GM12878 (cell line): ENCODE measurements at regions of chr9 and their contacts with region 1.

Region 1: DNA sequence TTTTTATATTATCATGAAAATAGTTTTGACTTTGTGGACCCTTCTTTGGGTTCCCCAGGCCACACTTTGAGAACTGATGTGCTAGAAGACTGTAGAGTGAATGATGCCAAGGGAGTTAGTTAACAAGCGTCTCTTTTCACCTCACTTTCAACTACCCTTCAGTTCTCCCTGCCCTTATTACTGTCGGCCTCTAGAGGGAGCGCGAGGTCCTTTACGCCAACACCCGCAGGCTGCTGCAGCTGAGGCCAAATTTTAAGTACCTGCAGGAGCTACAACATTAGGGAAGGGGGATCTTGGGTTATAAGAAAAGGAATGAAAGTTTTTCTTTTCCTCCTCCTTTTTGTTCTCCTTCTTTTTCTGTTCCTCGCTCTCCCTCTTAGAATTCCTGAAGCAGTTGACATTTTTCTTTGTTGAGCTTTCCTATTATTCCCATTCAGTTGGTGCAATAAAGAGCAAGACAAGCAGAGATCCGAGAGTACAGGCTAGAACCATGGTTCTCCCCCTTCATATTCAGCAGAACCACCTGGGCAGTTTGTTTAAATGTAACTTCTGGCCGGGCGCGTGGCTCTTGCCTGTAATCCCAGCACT is 84.0 kb downstream of the ZFAND5 start:
- DNase-seq: no peak
- ATAC-seq: peak; percentile 92
- H3K4me3 ChIP-seq: no peak overlapping the region
- H3K27ac ChIP-seq: no peak overlapping the region
- H3K4me1 ChIP-seq: no peaks in the 10 kb centered on the region
- H3K27me3 ChIP-seq: no peaks in the 10 kb centered on the region
- CTCF ChIP-seq: peak; percentile 91 to 99 (median 95); a peak in 5 of 6 replicates
- EP300 ChIP-seq: no peak
- POLR2A ChIP-seq: no peak
- RAD21 ChIP-seq: peak; percentile 99

Region 2: GRCh38 chr9:71587576-71588362 is 693.2 kb before region 1 on chr9:
- CTCF ChIA-PET with region 1: no interaction called
- POLR2A ChIA-PET with region 1: no interaction called
- RAD21 ChIA-PET with region 1: no interaction called
- SMC1A ChIA-PET with region 1: no interaction called
- in situ Hi-C with region 1: no loop called
- intact Hi-C with region 1: no loop called
- DNase-seq: no peak
- ATAC-seq: no peak
- H3K4me3 ChIP-seq: no peak overlapping the region
- H3K27ac ChIP-seq: no peak overlapping the region
- H3K4me1 ChIP-seq: no peaks in the 10 kb centered on the region
- H3K27me3 ChIP-seq: no peaks in the 10 kb centered on the region; a peak in 1 of 4 replicates
- CTCF ChIP-seq: no peak
- EP300 ChIP-seq: no peak
- POLR2A ChIP-seq: no peak
- RAD21 ChIP-seq: no peak

Region 3: GRCh38 chr9:72022841-72023240 is 258.2 kb before region 1 on chr9:
- CTCF ChIA-PET with region 1: interaction called, 17 read pairs
- POLR2A ChIA-PET with region 1: no interaction called
- RAD21 ChIA-PET with region 1: interaction called, 4 read pairs
- SMC1A ChIA-PET with region 1: interaction called, 6 read pairs
- in situ Hi-C with region 1: no loop called
- intact Hi-C with region 1: no loop called
- DNase-seq: no peak
- ATAC-seq: no peak
- H3K4me3 ChIP-seq: no peak overlapping the region
- H3K27ac ChIP-seq: no peak overlapping the region
- H3K4me1 ChIP-seq: no peaks in the 10 kb centered on the region
- H3K27me3 ChIP-seq: no peaks in the 10 kb centered on the region
- CTCF ChIP-seq: no peak
- EP300 ChIP-seq: no peak
- POLR2A ChIP-seq: no peak
- RAD21 ChIP-seq: no peak

Region 4: GRCh38 chr9:72251589-72251988 is 29.4 kb before region 1 on chr9:
- CTCF ChIA-PET with region 1: interaction called, 10 read pairs
- POLR2A ChIA-PET with region 1: no interaction called
- RAD21 ChIA-PET with region 1: interaction called, 3 read pairs
- SMC1A ChIA-PET with region 1: interaction called, 3 read pairs
- in situ Hi-C with region 1: no loop called
- intact Hi-C with region 1: no loop called
- DNase-seq: no peak
- ATAC-seq: no peak
- H3K4me3 ChIP-seq: no peak overlapping the region
- H3K27ac ChIP-seq: no peak overlapping the region
- H3K4me1 ChIP-seq: no peaks in the 10 kb centered on the region
- H3K27me3 ChIP-seq: no peaks in the 10 kb centered on the region
- CTCF ChIP-seq: no peak
- EP300 ChIP-seq: no peak
- POLR2A ChIP-seq: no peak
- RAD21 ChIP-seq: no peak

Region 5: DNA sequence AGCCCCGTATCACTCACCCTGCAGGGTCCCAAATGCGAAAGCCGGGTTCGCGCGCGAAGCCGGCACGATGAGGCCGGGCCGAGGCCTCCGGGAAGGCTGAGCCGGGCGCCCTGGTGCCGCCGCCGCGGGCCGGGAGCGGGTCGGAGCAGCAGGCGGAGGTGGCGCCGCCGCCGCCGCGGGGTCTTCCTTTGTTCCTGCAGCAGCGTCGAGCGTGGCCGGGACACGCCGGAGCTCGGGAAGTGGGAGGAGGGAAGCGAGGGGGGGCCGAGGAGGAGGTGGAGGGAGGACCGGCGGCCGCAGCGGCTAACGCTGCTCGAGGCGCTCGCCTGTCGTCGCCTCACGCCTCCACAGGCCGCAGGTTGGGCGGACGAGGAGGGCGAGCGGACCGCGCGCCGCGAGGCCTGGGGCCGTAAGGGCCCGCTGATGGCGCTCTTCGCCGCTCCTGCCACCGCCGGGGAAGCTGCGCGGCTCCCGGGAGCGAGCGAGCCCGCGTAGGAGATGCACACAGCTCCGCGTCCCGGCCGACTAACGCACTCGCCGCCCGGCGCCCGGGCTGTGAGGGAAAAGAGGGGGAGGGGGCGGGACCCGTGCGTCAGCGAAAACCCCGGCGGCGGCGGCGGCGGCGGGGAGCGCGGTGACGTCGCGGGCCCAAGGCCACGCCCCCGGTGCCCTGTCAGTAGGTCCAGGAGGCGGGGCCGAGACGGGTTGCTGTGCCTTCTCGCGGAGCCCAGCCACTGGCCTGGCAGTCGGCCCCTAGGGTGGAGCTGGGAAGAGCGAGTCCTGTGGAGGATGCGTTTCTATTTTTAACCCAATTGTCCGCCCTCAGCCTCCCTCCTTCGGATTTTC is 83.9 kb after region 1 on chr9 and contains the start of gene ZFAND5:
- CTCF ChIA-PET with region 1: interaction called, 26 read pairs
- POLR2A ChIA-PET with region 1: interaction called, 3 read pairs
- RAD21 ChIA-PET with region 1: interaction called, 24 read pairs
- SMC1A ChIA-PET with region 1: interaction called, 12 read pairs
- in situ Hi-C with region 1: no loop called
- intact Hi-C with region 1: no loop called
- DNase-seq: peak; percentile 57
- ATAC-seq: peak; percentile 88
- H3K4me3 ChIP-seq: peak within 1 kb of the TSS; percentile 91
- H3K27ac ChIP-seq: peak within 1 kb of the TSS; percentile 80
- H3K4me1 ChIP-seq: peaks cover 4% of the 10 kb centered on the region
- H3K27me3 ChIP-seq: no peaks in the 10 kb centered on the region
- CTCF ChIP-seq: peak in 1 of 3 experiments; percentile 27; a peak in 1 of 6 replicates
- EP300 ChIP-seq: peak in 1 of 2 experiments; percentile 44; a peak in 2 of 4 replicates
- POLR2A ChIP-seq: peak; percentile 97
- RAD21 ChIP-seq: peak; percentile 20; the same call in 1 of the 2 replicates
- polyA plus RNA-seq, gene ZFAND5: 22.5 to 32.3 TPM

Region 6: DNA sequence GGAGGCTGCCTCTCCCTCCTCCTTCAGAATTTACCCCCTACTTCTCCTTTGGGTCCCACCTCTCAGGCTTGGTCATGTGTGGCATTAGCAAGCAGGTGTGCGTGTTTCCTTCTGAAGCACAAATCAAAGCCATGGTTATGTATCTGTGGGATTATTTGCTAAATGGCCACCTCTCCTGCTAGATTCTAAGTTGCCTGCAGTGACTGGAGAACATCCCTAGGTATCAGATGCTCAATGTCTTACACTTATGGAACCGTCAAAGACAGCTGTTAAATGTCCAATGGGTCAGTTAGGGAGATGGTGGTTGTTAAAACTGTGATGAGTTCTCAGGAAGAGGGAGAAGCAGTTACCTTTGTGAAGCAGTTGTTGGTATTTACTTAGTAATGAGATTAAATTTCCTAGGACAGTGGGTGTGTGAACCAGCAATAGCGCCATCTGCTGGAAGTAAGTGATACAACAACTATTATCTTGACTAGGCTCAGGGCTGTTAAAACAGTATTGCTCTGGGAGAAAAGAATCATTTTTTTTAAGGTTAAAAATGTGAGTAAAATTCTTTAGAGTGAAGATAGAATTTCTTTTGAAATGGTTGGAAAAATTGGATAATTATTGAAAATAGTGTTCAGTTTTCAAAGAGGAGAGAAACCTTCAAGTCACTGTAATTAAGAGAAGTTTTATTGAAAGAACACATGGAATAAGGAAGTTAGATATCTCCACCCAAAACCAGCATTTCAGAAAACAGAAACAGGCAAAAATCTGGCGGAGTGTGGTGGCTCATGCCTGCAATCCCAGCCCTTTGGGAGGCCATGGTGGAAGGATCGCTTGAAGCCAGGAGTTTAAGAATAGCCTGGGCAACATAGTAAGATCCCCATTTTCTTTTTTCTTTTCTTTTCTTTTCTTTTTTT is 311.7 kb after region 1 on chr9:
- CTCF ChIA-PET with region 1: interaction called, 172 read pairs
- POLR2A ChIA-PET with region 1: no interaction called
- RAD21 ChIA-PET with region 1: interaction called, 63 read pairs
- SMC1A ChIA-PET with region 1: interaction called, 97 read pairs
- in situ Hi-C with region 1: loop called (anchors 5 kb)
- intact Hi-C with region 1: loop called (anchors 1 kb)
- DNase-seq: peak; percentile 23
- ATAC-seq: peak; percentile 94
- H3K4me3 ChIP-seq: no peak overlapping the region
- H3K27ac ChIP-seq: no peak overlapping the region
- H3K4me1 ChIP-seq: no peaks in the 10 kb centered on the region
- H3K27me3 ChIP-seq: no peaks in the 10 kb centered on the region
- CTCF ChIP-seq: peak; percentile 64 to 76 (median 69)
- EP300 ChIP-seq: no peak
- POLR2A ChIP-seq: no peak
- RAD21 ChIP-seq: peak; percentile 86

Region 7: DNA sequence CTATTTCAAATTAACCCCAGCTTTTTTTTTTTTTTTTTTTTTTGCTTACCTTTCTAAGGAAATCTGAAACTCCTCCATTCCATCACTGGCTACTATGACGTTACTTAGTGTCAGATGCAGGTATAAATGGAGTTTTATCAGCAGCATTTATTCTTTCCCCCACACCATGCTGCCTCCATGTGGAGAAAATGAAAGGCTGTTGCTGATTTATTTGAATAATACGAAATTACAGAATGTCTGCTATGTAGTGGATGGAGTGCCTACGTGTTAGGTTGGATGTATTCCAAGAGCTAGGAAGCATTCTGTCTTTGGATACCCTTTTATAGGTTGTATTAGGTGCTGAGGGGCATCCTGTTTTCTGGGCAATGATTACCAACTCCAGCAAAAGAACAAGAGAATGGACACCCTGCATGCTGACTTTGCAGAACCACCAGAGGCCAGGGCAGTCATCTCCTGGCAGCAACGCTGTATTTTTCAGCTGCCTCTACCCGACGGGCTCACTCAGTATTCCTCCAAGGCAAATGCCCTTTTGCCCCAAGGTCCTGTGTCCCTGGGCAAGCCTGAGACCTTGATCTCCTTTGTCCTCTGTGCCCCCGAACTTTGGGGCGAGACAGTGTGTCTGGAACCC is 472.4 kb after region 1 on chr9:
- CTCF ChIA-PET with region 1: interaction called, 22 read pairs
- POLR2A ChIA-PET with region 1: no interaction called
- RAD21 ChIA-PET with region 1: interaction called, 5 read pairs
- SMC1A ChIA-PET with region 1: interaction called, 4 read pairs
- in situ Hi-C with region 1: no loop called
- intact Hi-C with region 1: loop called (anchors 5 kb)
- DNase-seq: no peak
- ATAC-seq: no peak
- H3K4me3 ChIP-seq: no peak overlapping the region
- H3K27ac ChIP-seq: no peak overlapping the region
- H3K4me1 ChIP-seq: no peaks in the 10 kb centered on the region
- H3K27me3 ChIP-seq: no peaks in the 10 kb centered on the region; a peak in 1 of 4 replicates
- CTCF ChIP-seq: peak in 1 of 3 experiments; percentile 37; a peak in 1 of 6 replicates
- EP300 ChIP-seq: no peak
- POLR2A ChIP-seq: no peak
- RAD21 ChIP-seq: peak; percentile 61

Region 8: DNA sequence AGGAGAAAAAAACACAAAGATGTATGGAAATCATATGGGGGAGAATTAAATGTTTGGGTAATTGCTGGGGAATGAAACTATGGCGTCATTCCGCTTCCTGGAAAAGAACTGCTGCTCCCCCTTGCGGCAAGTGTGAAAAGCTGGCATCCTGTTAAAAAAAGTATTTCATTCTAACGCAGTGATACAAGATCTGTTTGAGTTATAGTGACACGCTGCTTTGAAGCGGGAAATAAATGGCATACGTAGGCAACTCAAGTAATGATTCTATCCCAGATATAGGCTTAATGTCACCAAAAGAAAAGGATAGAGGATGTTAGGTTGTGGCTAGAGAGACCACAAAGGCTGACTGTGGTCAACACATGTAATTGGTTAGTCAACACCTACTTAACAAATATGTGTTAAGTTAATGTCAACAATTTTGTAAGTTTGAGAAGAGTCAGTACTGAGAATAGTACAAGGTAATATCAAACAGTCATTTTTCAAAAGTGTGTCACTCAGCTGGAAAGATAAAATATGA is 742.1 kb after region 1 on chr9:
- CTCF ChIA-PET with region 1: interaction called, 16 read pairs
- POLR2A ChIA-PET with region 1: no interaction called
- RAD21 ChIA-PET with region 1: interaction called, 9 read pairs
- SMC1A ChIA-PET with region 1: interaction called, 12 read pairs
- in situ Hi-C with region 1: loop called (anchors 25 kb)
- intact Hi-C with region 1: loop called (anchors 1 kb)
- DNase-seq: peak; percentile 3
- ATAC-seq: peak; percentile 64
- H3K4me3 ChIP-seq: no peak overlapping the region
- H3K27ac ChIP-seq: no peak overlapping the region
- H3K4me1 ChIP-seq: no peaks in the 10 kb centered on the region
- H3K27me3 ChIP-seq: no peaks in the 10 kb centered on the region; a peak in 1 of 4 replicates
- CTCF ChIP-seq: peak; percentile 65 to 78 (median 70); a peak in 5 of 6 replicates
- EP300 ChIP-seq: no peak
- POLR2A ChIP-seq: no peak
- RAD21 ChIP-seq: peak; percentile 63